ENCODE measurements at regions of chr1 and their contacts with region 1.

Region 1: GRCh38 chr1:183845681-183846080 is 40.8 kb downstream of the RGL1 start:
- DNase-seq: no peak
- ATAC-seq: no peak
- H3K4me3 ChIP-seq: no peak overlapping the region
- H3K27ac ChIP-seq: no peak overlapping the region
- H3K4me1 ChIP-seq: no peaks in the 10 kb centered on the region
- H3K27me3 ChIP-seq: no peaks in the 10 kb centered on the region
- CTCF ChIP-seq: no peak
- POLR2A ChIP-seq: no peak

Region 2: DNA sequence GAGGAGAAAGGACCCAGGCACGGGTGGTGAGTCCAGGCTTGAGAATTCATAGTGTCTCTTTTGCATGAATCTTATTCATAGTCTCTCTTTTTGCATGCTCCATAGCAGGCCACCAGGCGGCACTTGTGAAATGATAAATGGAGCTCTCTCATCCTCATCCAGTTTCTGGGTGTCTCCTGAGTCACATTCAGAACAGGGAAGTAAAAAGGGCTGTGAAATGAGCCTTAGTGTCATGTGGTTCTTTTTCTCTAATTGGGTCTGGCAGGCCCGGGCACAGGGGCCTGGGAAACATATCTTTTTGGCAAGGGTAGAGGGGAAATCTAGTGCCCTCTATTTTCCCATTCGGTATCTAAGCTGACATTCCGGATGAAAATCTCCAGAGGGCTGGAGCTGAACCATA is 236.4 kb before region 1 on chr1:
- intact Hi-C with region 1: loop called in 1 of 2 experiments (anchors 5 kb)
- DNase-seq: no peak
- ATAC-seq: peak; percentile 68 to 82 (median 78)
- H3K4me3 ChIP-seq: no peak overlapping the region
- H3K27ac ChIP-seq: peak overlapping the region in 2 of 3 donors; percentile 1 to 8
- H3K4me1 ChIP-seq: no peaks in the 10 kb centered on the region
- H3K27me3 ChIP-seq: no peaks in the 10 kb centered on the region
- CTCF ChIP-seq: peak; percentile 26 to 41 (median 33)
- POLR2A ChIP-seq: no peak

Region 3: DNA sequence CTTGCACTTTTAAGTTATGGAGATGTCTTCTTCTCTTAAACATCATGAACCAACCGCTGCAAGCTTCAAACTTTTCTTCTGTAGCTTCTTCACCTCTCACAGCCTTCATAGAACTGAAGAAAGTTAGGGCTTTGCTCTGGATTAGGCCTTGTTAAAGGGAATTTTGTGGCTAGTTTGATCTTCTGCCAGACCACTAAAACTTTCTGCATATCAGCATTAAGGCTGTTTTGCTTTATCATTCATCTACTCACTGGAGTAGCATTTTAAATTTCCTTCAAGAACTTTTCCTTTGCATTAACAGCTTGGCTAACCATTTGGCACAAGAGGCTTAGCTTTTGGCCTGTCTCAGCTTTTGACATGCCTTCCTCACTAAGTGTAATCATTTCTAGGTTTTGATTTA is 83.8 kb before region 1 on chr1:
- intact Hi-C with region 1: no loop called
- DNase-seq: no peak
- ATAC-seq: no peak
- H3K4me3 ChIP-seq: no peak overlapping the region
- H3K27ac ChIP-seq: no peak overlapping the region
- H3K4me1 ChIP-seq: no peaks in the 10 kb centered on the region
- H3K27me3 ChIP-seq: no peaks in the 10 kb centered on the region
- CTCF ChIP-seq: no peak
- POLR2A ChIP-seq: no peak

Measured in right lobe of liver (tissue), 6 donors.